ENCODE measurements at regions of chr2 and their contacts with region 1.

Region 1: DNA sequence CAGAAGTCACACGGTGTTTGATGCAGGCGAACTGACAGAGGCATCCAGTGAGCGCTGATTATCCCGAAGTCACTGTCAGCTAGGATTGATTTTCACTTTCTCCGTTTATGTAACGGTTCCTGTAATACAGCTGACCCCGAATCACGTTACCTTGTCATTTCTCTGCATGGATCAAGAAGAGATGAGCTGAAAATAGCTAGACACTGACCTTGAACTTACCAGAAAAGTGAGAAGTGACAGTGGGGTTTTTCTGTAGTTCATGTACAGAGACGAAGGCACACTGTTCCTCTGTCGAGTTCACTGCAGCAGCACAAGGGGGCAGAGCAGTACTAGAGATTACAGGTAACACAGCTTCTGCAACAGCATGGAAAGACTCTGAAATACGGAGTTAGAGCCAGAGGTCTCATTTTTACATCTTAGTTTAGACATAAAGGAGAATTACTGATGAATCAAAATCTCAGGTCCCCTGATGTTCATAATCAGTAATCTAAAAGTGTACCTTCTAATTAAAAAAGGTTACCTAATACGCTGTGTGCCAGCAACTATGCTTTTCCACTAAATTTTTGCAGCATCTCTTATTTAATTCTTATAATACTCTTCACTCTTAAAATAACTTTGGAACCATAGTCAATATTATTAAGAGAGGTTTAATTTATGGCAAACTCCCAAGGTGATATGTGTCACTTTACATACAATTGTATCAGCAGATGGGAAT is 33.1 kb downstream of the ARHGAP15 start:
- DNase-seq: peak; percentile 77
- ATAC-seq: peak; percentile 90
- H3K4me3 ChIP-seq: no peak overlapping the region
- H3K4me3 Mint-ChIP-seq: no peak overlapping the region
- H3K27ac ChIP-seq: peak overlapping the region in 1 of 2 donors; percentile 42
- H3K27ac Mint-ChIP-seq: peak overlapping the region; percentile 28
- H3K4me1 ChIP-seq: peaks cover 45 to 56% of the 10 kb centered on the region in 2 donors
- H3K4me1 Mint-ChIP-seq: peaks cover 73% of the 10 kb centered on the region
- H3K27me3 ChIP-seq: no peaks in the 10 kb centered on the region
- H3K27me3 Mint-ChIP-seq: no peaks in the 10 kb centered on the region
- CTCF ChIP-seq: peak; percentile 78

Region 2: GRCh38 chr2:143051465-143051864 is 110.8 kb before region 1 on chr2:
- CTCF ChIA-PET with region 1: no interaction called
- POLR2A ChIA-PET with region 1: no interaction called
- intact Hi-C with region 1: no loop called
- DNase-seq: no peak
- ATAC-seq: no peak
- H3K4me3 ChIP-seq: no peak overlapping the region
- H3K4me3 Mint-ChIP-seq: no peak overlapping the region
- H3K27ac ChIP-seq: no peak overlapping the region
- H3K27ac Mint-ChIP-seq: no peak overlapping the region
- H3K4me1 ChIP-seq: no peaks in the 10 kb centered on the region
- H3K4me1 Mint-ChIP-seq: no peaks in the 10 kb centered on the region
- H3K27me3 ChIP-seq: no peaks in the 10 kb centered on the region
- H3K27me3 Mint-ChIP-seq: no peaks in the 10 kb centered on the region
- CTCF ChIP-seq: no peak

Region 3: GRCh38 chr2:143121079-143121478 is 41.2 kb before region 1 on chr2:
- CTCF ChIA-PET with region 1: interaction called, 12 read pairs
- POLR2A ChIA-PET with region 1: no interaction called
- intact Hi-C with region 1: no loop called
- DNase-seq: no peak
- ATAC-seq: no peak
- H3K4me3 ChIP-seq: peak overlapping the region in 2 of 5 experiments; percentile 6 to 34
- H3K4me3 Mint-ChIP-seq: no peak overlapping the region
- H3K27ac ChIP-seq: peak overlapping the region; percentile 45 to 72
- H3K27ac Mint-ChIP-seq: no peak overlapping the region
- H3K4me1 ChIP-seq: peaks cover 33 to 35% of the 10 kb centered on the region in 2 donors
- H3K4me1 Mint-ChIP-seq: peaks cover 17% of the 10 kb centered on the region
- H3K27me3 ChIP-seq: no peaks in the 10 kb centered on the region
- H3K27me3 Mint-ChIP-seq: no peaks in the 10 kb centered on the region
- CTCF ChIP-seq: no peak

Region 4: GRCh38 chr2:143150287-143150686 is 12.0 kb before region 1 on chr2:
- CTCF ChIA-PET with region 1: interaction called, 23 read pairs
- POLR2A ChIA-PET with region 1: no interaction called
- intact Hi-C with region 1: no loop called
- DNase-seq: peak; percentile 79
- ATAC-seq: peak; percentile 82
- H3K4me3 ChIP-seq: peak overlapping the region in 3 of 5 experiments; percentile 12 to 34 (median 25)
- H3K4me3 Mint-ChIP-seq: peak overlapping the region; percentile 68
- H3K27ac ChIP-seq: peak overlapping the region; percentile 62 to 78
- H3K27ac Mint-ChIP-seq: peak overlapping the region; percentile 92
- H3K4me1 ChIP-seq: peaks cover 82 to 91% of the 10 kb centered on the region in 2 donors
- H3K4me1 Mint-ChIP-seq: peaks cover 85% of the 10 kb centered on the region
- H3K27me3 ChIP-seq: no peaks in the 10 kb centered on the region
- H3K27me3 Mint-ChIP-seq: no peaks in the 10 kb centered on the region
- CTCF ChIP-seq: no peak

Region 5: GRCh38 chr2:143217512-143218115 is 55.3 kb after region 1 on chr2:
- CTCF ChIA-PET with region 1: interaction called, 127 read pairs
- POLR2A ChIA-PET with region 1: no interaction called
- intact Hi-C with region 1: loop called (anchors 1 kb)
- DNase-seq: no peak
- ATAC-seq: peak; percentile 17
- H3K4me3 ChIP-seq: no peak overlapping the region
- H3K4me3 Mint-ChIP-seq: no peak overlapping the region
- H3K27ac ChIP-seq: peak overlapping the region in 1 of 2 donors; percentile 57
- H3K27ac Mint-ChIP-seq: peak overlapping the region; percentile 84
- H3K4me1 ChIP-seq: no peaks in the 10 kb centered on the region
- H3K4me1 Mint-ChIP-seq: peaks cover 16% of the 10 kb centered on the region
- H3K27me3 ChIP-seq: no peaks in the 10 kb centered on the region
- H3K27me3 Mint-ChIP-seq: no peaks in the 10 kb centered on the region
- CTCF ChIP-seq: no peak

Region 6: GRCh38 chr2:143259368-143259958 is 97.2 kb after region 1 on chr2:
- CTCF ChIA-PET with region 1: interaction called, 165 read pairs
- POLR2A ChIA-PET with region 1: no interaction called
- intact Hi-C with region 1: loop called (anchors 1 kb)
- DNase-seq: peak; percentile 78
- ATAC-seq: no peak
- H3K4me3 ChIP-seq: no peak overlapping the region
- H3K4me3 Mint-ChIP-seq: peak overlapping the region; percentile 2
- H3K27ac ChIP-seq: peak overlapping the region in 1 of 2 donors; percentile 79
- H3K27ac Mint-ChIP-seq: peak overlapping the region; percentile 10
- H3K4me1 ChIP-seq: peaks cover 51 to 55% of the 10 kb centered on the region in 2 donors
- H3K4me1 Mint-ChIP-seq: peaks cover 66% of the 10 kb centered on the region
- H3K27me3 ChIP-seq: no peaks in the 10 kb centered on the region
- H3K27me3 Mint-ChIP-seq: no peaks in the 10 kb centered on the region
- CTCF ChIP-seq: peak; percentile 92

Region 7: DNA sequence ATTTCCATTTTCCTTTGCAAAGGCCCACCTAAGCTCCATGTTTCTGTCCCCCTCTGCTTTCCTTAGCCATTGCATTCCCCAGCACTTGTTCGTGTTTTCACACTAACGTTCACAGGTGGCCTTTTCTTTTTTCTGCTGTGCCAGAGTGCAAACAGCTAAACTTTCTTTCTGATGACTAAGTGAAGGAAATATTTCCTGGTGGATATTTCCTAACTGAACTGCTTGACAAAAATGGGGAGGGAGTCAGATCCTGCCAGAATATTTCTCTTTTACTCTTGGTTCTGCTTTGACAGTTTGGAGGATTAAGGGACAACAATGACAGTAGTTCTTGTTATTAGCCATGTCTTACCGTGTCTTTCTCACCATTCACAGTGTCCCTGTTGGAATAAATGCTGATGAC is 310.9 kb after region 1 on chr2:
- CTCF ChIA-PET with region 1: no interaction called
- POLR2A ChIA-PET with region 1: no interaction called
- intact Hi-C with region 1: no loop called
- DNase-seq: no peak
- ATAC-seq: no peak
- H3K4me3 ChIP-seq: no peak overlapping the region
- H3K4me3 Mint-ChIP-seq: no peak overlapping the region
- H3K27ac ChIP-seq: no peak overlapping the region
- H3K27ac Mint-ChIP-seq: no peak overlapping the region
- H3K4me1 ChIP-seq: no peaks in the 10 kb centered on the region
- H3K4me1 Mint-ChIP-seq: peaks cover 11% of the 10 kb centered on the region
- H3K27me3 ChIP-seq: no peaks in the 10 kb centered on the region
- H3K27me3 Mint-ChIP-seq: no peaks in the 10 kb centered on the region
- CTCF ChIP-seq: no peak